CD8-positive, alpha-beta T cell (primary cell): ENCODE measurements at regions of chr1 and their contacts with region 1.

Region 1: GRCh38 chr1:89804642-89805237 is 16.1 kb upstream of the LRRC8D start:
- DNase-seq: peak; percentile 68 to 91 (median 85)
- ATAC-seq: peak; percentile 93
- H3K4me3 ChIP-seq: no peak overlapping the region
- H3K4me3 Mint-ChIP-seq: no peak overlapping the region
- H3K27ac ChIP-seq: no peak overlapping the region
- H3K27ac Mint-ChIP-seq: no peak overlapping the region
- H3K4me1 ChIP-seq: no peaks in the 10 kb centered on the region
- H3K4me1 Mint-ChIP-seq: no peaks in the 10 kb centered on the region
- H3K27me3 ChIP-seq: no peaks in the 10 kb centered on the region
- H3K27me3 Mint-ChIP-seq: peaks cover 2% of the 10 kb centered on the region
- CTCF ChIP-seq: peak; percentile 91

Region 2: DNA sequence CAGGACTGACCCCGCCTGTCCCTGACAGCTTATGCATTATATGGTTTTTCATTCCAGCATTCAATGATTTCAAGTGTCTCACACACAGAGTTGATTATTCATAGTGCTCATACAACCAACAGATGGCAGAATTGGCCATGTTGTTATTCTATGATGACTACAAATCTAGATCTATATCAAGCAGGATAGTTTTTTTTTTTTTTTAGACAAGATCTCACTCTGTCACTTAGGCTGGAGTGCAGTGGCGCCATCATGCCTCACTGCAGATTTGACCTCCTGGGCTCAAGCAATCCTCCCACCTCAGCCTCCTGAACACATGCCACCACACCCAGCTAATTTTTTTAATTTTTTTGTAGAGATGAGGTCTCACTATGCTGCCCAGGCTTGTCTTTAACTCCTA is 24.0 kb before region 1 on chr1:
- CTCF ChIA-PET with region 1: interaction called, 5 read pairs
- POLR2A ChIA-PET with region 1: no interaction called
- intact Hi-C with region 1: loop called in 1 of 2 experiments (anchors 2 kb)
- DNase-seq: peak in 2 of 9 experiments; percentile 51 to 71
- ATAC-seq: peak; percentile 75
- H3K4me3 ChIP-seq: no peak overlapping the region
- H3K4me3 Mint-ChIP-seq: no peak overlapping the region
- H3K27ac ChIP-seq: no peak overlapping the region
- H3K27ac Mint-ChIP-seq: no peak overlapping the region
- H3K4me1 ChIP-seq: peaks cover 16% of the 10 kb centered on the region
- H3K4me1 Mint-ChIP-seq: peaks cover 21% of the 10 kb centered on the region
- H3K27me3 ChIP-seq: no peaks in the 10 kb centered on the region
- H3K27me3 Mint-ChIP-seq: no peaks in the 10 kb centered on the region
- CTCF ChIP-seq: peak; percentile 48

Region 3: DNA sequence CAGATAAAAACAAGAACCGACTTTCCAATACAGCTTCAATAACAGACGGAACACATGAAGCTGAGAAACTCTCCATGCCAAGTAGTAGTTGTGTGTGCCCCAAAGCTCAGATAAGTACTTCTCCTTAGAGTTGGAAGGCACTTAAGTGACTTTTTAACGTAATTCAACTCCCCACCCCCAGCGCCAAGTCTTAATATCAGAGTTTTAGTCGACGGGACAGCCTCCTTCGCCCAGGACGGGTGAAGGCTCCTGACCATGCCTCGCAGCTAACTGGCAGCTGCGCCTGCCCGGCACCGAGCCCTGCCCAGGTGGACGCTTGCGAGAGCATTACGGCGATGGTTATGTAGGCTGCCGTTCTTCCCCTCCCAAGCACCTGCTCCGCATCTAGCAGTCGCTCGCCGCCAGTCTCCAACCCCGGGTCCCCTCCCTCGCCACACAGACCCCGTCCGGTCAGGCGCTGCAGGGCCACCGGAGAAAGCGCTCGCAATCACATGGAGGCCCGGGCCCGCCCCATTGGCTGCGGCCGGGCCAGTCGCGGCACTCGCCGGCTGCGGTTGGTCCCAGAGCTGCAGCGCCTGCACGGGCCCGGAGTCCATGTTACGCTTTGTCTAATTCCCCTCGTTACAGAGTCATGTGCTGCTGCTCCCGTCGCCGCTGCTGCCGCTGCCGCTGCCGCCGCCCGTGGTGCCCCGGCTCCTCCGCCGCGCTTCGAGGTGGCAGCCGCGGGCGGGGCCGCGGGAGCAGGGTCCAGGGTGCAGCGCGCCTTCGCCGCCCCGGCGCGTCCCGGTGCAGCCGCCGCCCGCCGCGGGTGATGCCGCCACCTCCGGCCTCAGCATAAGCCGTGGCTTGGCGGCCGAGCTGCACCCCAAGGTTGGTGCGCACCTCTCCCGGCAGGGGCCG is 15.9 kb after region 1 on chr1 and contains the start of gene LRRC8D:
- CTCF ChIA-PET with region 1: interaction called, 6 read pairs
- POLR2A ChIA-PET with region 1: interaction called, 4 read pairs
- intact Hi-C with region 1: loop called in 1 of 2 experiments (anchors 2 kb)
- DNase-seq: peak; percentile 10 to 81 (median 64)
- ATAC-seq: peak; percentile 52
- H3K4me3 ChIP-seq: peak within 1 kb of the TSS; percentile 78 to 82
- H3K4me3 Mint-ChIP-seq: peak within 1 kb of the TSS; percentile 87
- H3K27ac ChIP-seq: peak within 1 kb of the TSS; percentile 51 to 63
- H3K27ac Mint-ChIP-seq: peak within 1 kb of the TSS; percentile 91
- H3K4me1 ChIP-seq: peaks cover 23% of the 10 kb centered on the region
- H3K4me1 Mint-ChIP-seq: peaks cover 44% of the 10 kb centered on the region
- H3K27me3 ChIP-seq: no peaks in the 10 kb centered on the region
- H3K27me3 Mint-ChIP-seq: no peaks in the 10 kb centered on the region
- CTCF ChIP-seq: no peak
- total RNA-seq, gene LRRC8D: 14.2 to 16.9 TPM

Region 4: DNA sequence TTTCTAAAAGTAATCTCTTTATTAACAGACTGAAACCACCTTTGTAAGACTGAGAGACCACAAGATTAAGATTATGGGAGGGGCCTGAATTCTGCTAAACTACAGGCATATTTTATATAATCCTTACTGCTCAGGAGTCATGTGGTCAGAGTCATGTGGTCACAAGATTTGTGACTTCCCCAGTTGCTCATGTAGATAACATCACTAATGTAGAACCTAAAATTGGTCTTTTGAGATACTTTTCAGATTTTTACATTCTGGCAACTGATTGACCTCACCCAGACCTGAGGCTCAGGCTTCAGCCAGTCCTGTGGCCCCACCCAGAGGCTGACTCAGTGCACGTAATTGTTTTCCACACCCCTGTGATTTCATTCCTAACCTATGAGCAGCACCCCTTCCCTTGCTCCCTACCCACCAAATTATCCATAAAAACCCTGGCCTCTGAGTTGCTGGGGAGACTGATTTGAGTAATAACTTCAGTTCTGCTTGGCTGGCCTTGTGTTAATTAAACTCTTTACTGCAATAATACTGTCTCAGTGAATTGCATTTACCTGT is 148.4 kb after region 1 on chr1:
- CTCF ChIA-PET with region 1: interaction called, 4 read pairs
- POLR2A ChIA-PET with region 1: no interaction called
- intact Hi-C with region 1: loop called in 1 of 2 experiments (anchors 1 kb)
- DNase-seq: peak in 7 of 9 experiments; percentile 10 to 52 (median 31)
- ATAC-seq: no peak
- H3K4me3 ChIP-seq: no peak overlapping the region
- H3K4me3 Mint-ChIP-seq: no peak overlapping the region
- H3K27ac ChIP-seq: no peak overlapping the region
- H3K27ac Mint-ChIP-seq: no peak overlapping the region
- H3K4me1 ChIP-seq: peaks cover 8% of the 10 kb centered on the region
- H3K4me1 Mint-ChIP-seq: peaks cover 24% of the 10 kb centered on the region
- H3K27me3 ChIP-seq: no peaks in the 10 kb centered on the region
- H3K27me3 Mint-ChIP-seq: no peaks in the 10 kb centered on the region
- CTCF ChIP-seq: no peak

Region 5: GRCh38 chr1:90402893-90403849 is 598.4 kb after region 1 on chr1:
- CTCF ChIA-PET with region 1: no interaction called
- POLR2A ChIA-PET with region 1: no interaction called
- intact Hi-C with region 1: no loop called
- DNase-seq: no peak
- ATAC-seq: no peak
- H3K4me3 ChIP-seq: no peak overlapping the region
- H3K4me3 Mint-ChIP-seq: no peak overlapping the region
- H3K27ac ChIP-seq: no peak overlapping the region
- H3K27ac Mint-ChIP-seq: no peak overlapping the region
- H3K4me1 ChIP-seq: no peaks in the 10 kb centered on the region
- H3K4me1 Mint-ChIP-seq: no peaks in the 10 kb centered on the region
- H3K27me3 ChIP-seq: peaks cover 0 to 2% of the 10 kb centered on the region in 2 experiments
- H3K27me3 Mint-ChIP-seq: peaks cover 9% of the 10 kb centered on the region
- CTCF ChIP-seq: no peak